Heart left ventricle (tissue), 16 donors: ENCODE measurements at regions of chr14 and their contacts with region 1.

Region 1: GRCh38 chr14:104157016-104157928 is 18.9 kb downstream of the KIF26A start:
- DNase-seq: no peak
- ATAC-seq: no peak
- H3K4me3 ChIP-seq: no peak overlapping the region
- H3K27ac ChIP-seq: no peak overlapping the region
- H3K4me1 ChIP-seq: peaks cover 0 to 33% (median 11%) of the 10 kb centered on the region in 12 donors
- H3K27me3 ChIP-seq: no peaks in the 10 kb centered on the region
- CTCF ChIP-seq: peak in 1 of 12 donors; percentile 5
- POLR2A ChIP-seq: no peak

Region 2: GRCh38 chr14:102738756-102739494 is 1418.3 kb before region 1 on chr14:
- intact Hi-C with region 1: loop called in 1 of 10 experiments (anchors 5 kb)
- DNase-seq: no peak
- ATAC-seq: peak in 1 of 4 donors; percentile 18
- H3K4me3 ChIP-seq: no peak overlapping the region
- H3K27ac ChIP-seq: no peak overlapping the region
- H3K4me1 ChIP-seq: no peaks in the 10 kb centered on the region
- H3K27me3 ChIP-seq: no peaks in the 10 kb centered on the region
- CTCF ChIP-seq: no peak
- POLR2A ChIP-seq: no peak

Region 3: GRCh38 chr14:103855063-103855733 is 302.1 kb before region 1 on chr14:
- intact Hi-C with region 1: no loop called
- DNase-seq: peak in 4 of 5 donors; percentile 35 to 72 (median 56)
- ATAC-seq: peak; percentile 38 to 83 (median 56)
- H3K4me3 ChIP-seq: no peak overlapping the region
- H3K27ac ChIP-seq: peak overlapping the region in 11 of 12 donors; percentile 24 to 79 (median 48)
- H3K4me1 ChIP-seq: peaks cover 5 to 32% (median 20%) of the 10 kb centered on the region in 12 donors
- H3K27me3 ChIP-seq: no peaks in the 10 kb centered on the region
- CTCF ChIP-seq: peak in 1 of 12 donors; percentile 9
- POLR2A ChIP-seq: no peak

Region 4: DNA sequence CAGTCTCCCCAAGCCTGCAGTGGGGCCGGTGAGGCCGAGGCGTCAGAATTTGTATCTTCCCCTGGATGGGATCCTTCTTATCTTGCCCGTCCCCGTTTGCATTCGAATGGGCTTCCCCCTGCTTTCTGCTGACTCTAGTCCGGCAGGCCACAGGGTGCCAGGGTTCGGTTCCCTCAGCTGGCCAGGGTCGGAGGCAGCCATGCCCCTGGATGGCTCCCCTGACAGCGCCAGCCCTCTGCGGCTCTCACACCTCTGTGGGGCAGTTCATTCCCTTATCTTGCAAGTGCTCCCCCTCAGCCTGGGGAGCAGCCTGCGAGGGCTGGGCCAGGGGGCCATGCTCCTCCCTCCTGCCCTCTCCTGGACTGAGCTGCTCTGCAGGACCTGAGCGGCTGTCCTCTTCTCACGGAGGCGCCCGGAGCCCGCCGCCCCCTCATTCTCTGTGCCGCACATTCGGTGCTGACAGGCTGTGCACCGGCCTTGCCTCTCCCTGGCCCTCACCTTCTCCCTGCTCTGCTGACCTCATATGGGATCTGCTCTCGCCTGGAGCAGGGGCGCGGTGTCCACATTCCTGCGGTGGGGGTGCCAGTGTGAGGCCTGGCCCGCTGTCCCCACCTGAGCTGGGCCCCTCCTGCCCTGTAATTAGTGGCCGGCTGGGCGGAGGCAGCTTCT is 13.9 kb after region 1 on chr14:
- intact Hi-C with region 1: loop called in 1 of 10 experiments (anchors 2 kb)
- DNase-seq: no peak
- ATAC-seq: no peak
- H3K4me3 ChIP-seq: peak overlapping the region in 3 of 12 donors; percentile 10 to 20 (median 15)
- H3K27ac ChIP-seq: peak overlapping the region in 6 of 12 donors; percentile 5 to 72 (median 54)
- H3K4me1 ChIP-seq: peaks cover 0 to 48% (median 26%) of the 10 kb centered on the region in 12 donors
- H3K27me3 ChIP-seq: no peaks in the 10 kb centered on the region
- CTCF ChIP-seq: no peak
- POLR2A ChIP-seq: no peak